Mammary epithelial cell (primary cell): ENCODE measurements at regions of chr5 and their contacts with region 1.

Region 1: GRCh38 chr5:93582677-93583438 is at the start of gene NR2F1:
- DNase-seq: peak; percentile 92
- H3K4me3 ChIP-seq: peak within 1 kb of the TSS; percentile 62 to 76 (median 67)
- H3K27ac ChIP-seq: peak within 1 kb of the TSS; percentile 38
- H3K4me1 ChIP-seq: peaks cover 18% of the 10 kb centered on the region
- H3K27me3 ChIP-seq: no peaks in the 10 kb centered on the region
- CTCF ChIP-seq: no peak
- total RNA-seq, gene NR2F1: 3.3 to 3.5 TPM

Region 2: DNA sequence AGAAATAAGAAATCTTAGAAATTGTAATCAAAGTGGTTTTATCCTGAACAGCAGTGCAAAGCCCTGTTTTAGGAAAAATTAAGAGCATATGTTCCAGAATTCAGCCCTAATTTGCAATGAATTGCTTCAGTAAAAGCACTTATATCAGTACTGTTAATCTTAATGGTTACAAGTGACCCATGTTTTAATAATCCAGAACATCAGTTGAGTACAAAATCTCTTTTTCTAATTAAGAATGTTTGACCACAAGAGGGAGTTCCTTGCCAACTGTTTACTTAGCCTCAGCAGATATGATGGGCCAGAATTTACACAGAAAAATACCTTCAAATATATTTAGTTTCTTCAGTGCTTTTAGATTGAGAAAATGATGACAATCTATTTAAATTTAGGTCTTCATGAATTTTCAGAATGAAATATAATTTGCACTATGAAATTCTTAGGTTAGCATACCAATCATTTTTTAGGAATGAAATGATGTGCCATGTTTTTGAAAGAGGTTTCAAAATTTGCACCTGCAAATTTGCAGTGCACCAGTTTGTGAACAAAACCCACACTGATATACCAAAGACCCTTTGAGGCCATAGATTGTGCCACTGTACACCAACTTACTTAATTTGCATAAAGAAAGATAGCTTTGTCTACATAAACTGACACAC is 1273.4 kb before region 1 on chr5:
- CTCF ChIA-PET with region 1: no interaction called
- dilution Hi-C with region 1: no loop called
- in situ Hi-C with region 1: no loop called
- intact Hi-C with region 1: loop called (anchors 5 kb)
- DNase-seq: peak; percentile 1
- H3K4me3 ChIP-seq: no peak overlapping the region
- H3K27ac ChIP-seq: no peak overlapping the region
- H3K4me1 ChIP-seq: no peaks in the 10 kb centered on the region
- H3K27me3 ChIP-seq: no peaks in the 10 kb centered on the region
- CTCF ChIP-seq: peak; percentile 28 to 55

Region 3: GRCh38 chr5:93017849-93018248 is 565.0 kb before region 1 on chr5:
- CTCF ChIA-PET with region 1: no interaction called
- dilution Hi-C with region 1: no loop called
- in situ Hi-C with region 1: no loop called
- intact Hi-C with region 1: no loop called
- DNase-seq: peak; percentile 90
- H3K4me3 ChIP-seq: no peak overlapping the region
- H3K27ac ChIP-seq: no peak overlapping the region
- H3K4me1 ChIP-seq: peaks cover 9% of the 10 kb centered on the region
- H3K27me3 ChIP-seq: no peaks in the 10 kb centered on the region
- CTCF ChIP-seq: no peak

Region 4: DNA sequence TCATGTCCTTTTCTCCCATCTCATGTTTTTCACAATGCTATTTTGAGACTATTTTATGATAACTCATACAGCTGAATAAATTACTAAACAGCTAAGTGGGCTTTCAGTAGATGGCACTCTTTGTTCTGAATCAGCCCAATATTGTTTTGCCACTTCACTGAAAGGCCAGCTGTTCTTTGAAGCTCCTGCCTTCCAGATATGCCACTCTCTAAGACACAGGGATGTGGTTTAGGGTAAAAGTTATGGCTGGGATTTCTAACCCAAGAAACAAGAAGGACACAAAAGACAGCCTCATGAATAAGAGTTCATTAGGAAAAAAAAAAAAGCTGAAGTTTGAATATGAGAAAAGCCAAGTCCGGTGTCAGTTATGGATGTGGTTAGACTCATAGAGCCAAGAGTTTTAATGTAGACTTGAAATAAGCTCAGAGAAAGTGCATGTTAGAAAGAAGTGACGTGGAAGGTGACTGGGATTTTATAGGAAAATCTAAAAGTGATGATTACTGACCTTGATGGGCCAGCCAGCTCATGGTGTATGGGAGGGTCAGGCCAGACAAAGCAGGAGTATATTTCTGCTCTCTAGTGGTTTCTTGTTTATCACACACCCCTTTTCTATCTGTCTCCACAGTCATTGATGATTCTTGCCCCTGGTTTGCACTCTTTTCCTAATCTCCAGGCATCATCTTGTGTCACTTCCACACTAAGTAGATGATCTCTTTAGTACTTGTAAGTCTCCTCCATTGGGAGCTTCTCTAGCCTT is 490.3 kb before region 1 on chr5:
- CTCF ChIA-PET with region 1: no interaction called
- dilution Hi-C with region 1: no loop called
- in situ Hi-C with region 1: no loop called
- intact Hi-C with region 1: loop called (anchors 1 kb)
- DNase-seq: peak; percentile 42
- H3K4me3 ChIP-seq: no peak overlapping the region
- H3K27ac ChIP-seq: no peak overlapping the region
- H3K4me1 ChIP-seq: peaks cover 3% of the 10 kb centered on the region
- H3K27me3 ChIP-seq: no peaks in the 10 kb centered on the region
- CTCF ChIP-seq: peak; percentile 16 to 58

Region 5: GRCh38 chr5:93299681-93300308 is 283.1 kb before region 1 on chr5:
- CTCF ChIA-PET with region 1: no interaction called
- dilution Hi-C with region 1: no loop called
- in situ Hi-C with region 1: no loop called
- intact Hi-C with region 1: loop called (anchors 10 kb)
- DNase-seq: no peak
- H3K4me3 ChIP-seq: no peak overlapping the region
- H3K27ac ChIP-seq: no peak overlapping the region
- H3K4me1 ChIP-seq: peaks cover 16% of the 10 kb centered on the region
- H3K27me3 ChIP-seq: no peaks in the 10 kb centered on the region
- CTCF ChIP-seq: no peak

Region 6: DNA sequence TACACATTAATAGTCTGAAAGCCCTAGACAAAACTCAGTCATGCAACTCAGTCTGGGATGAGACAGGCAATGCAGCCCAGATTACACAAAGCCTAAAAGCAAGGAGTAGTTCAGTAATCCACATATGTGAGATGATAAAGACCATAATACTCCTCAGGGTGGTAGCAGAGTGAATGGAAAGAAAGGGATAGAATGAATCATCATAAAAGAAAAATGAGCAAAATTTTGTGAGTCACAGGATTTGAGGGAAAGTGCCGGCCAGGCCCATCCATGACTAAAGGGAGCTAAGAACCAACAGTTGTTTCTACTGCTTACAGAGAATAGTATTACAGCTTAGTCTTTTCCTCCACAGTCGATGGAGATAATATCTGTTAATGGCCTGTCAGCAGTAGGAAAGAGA is 248.6 kb after region 1 on chr5:
- CTCF ChIA-PET with region 1: interaction called, 18 read pairs
- dilution Hi-C with region 1: no loop called
- in situ Hi-C with region 1: no loop called
- intact Hi-C with region 1: no loop called
- DNase-seq: peak; percentile 85
- H3K4me3 ChIP-seq: no peak overlapping the region
- H3K27ac ChIP-seq: no peak overlapping the region
- H3K4me1 ChIP-seq: peaks cover 10% of the 10 kb centered on the region
- H3K27me3 ChIP-seq: no peaks in the 10 kb centered on the region
- CTCF ChIP-seq: peak in 1 of 2 donors; percentile 11

Region 7: DNA sequence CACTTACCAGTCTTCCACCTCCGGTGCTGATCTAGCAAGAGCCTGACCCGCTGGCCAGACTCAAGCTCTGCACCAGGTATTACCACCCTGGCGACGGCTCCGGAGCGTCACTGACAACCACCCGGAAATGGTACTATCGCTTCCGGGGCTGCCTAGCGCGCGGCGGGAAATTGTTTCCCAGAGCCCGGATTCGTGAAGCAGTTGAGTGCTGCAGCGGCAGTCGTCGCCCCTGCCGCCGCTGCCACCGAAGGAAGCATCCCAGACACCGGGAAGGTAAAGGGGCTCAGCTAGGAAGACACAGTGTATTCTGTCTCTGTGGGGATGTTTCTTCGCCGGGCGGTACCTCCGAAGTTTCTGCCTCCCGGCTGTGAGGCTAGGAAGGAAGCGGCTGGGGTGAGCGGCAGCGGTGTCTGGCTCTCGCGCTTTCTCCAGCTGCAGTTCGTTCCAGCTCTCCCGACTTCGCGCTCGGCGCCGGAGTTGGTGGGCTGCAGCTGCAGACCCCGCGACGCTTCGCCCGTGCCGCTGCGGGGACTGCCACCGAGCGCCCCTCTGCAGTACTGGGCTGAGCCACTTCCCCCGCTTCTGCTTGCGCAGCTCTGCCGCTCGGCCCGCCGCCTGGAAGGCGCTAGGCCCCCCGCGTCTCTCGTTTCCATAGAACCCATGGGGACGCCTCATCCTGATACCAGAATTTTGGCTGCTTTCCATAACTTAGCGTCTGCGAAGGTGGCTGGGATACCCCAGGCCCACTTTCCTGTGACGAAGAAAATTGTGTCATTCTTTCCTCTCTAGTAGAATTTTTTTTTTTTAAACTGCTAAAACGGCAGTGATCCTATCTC is 1035.9 kb after region 1 on chr5 and contains the starts of genes KIAA0825 and SLF1:
- CTCF ChIA-PET with region 1: no interaction called
- dilution Hi-C with region 1: no loop called
- in situ Hi-C with region 1: no loop called
- intact Hi-C with region 1: loop called (anchors 5 kb)
- DNase-seq: peak; percentile 90
- H3K4me3 ChIP-seq: peak within 1 kb of the TSS; percentile 59 to 94 (median 59)
- H3K27ac ChIP-seq: peak within 1 kb of the TSS; percentile 83
- H3K4me1 ChIP-seq: peaks cover 13% of the 10 kb centered on the region
- H3K27me3 ChIP-seq: no peaks in the 10 kb centered on the region
- CTCF ChIP-seq: no peak
- total RNA-seq, gene KIAA0825: 0.89 to 9.3 TPM
- total RNA-seq, gene SLF1: 4.2 to 8.9 TPM

Region 8: GRCh38 chr5:94715671-94716211 is 1132.9 kb after region 1 on chr5:
- CTCF ChIA-PET with region 1: no interaction called
- dilution Hi-C with region 1: no loop called
- in situ Hi-C with region 1: no loop called
- intact Hi-C with region 1: no loop called
- DNase-seq: no peak
- H3K4me3 ChIP-seq: no peak overlapping the region
- H3K27ac ChIP-seq: no peak overlapping the region
- H3K4me1 ChIP-seq: no peaks in the 10 kb centered on the region
- H3K27me3 ChIP-seq: no peaks in the 10 kb centered on the region
- CTCF ChIP-seq: no peak